ENCODE measurements at regions of chr1 and their contacts with region 1.

Region 1: DNA sequence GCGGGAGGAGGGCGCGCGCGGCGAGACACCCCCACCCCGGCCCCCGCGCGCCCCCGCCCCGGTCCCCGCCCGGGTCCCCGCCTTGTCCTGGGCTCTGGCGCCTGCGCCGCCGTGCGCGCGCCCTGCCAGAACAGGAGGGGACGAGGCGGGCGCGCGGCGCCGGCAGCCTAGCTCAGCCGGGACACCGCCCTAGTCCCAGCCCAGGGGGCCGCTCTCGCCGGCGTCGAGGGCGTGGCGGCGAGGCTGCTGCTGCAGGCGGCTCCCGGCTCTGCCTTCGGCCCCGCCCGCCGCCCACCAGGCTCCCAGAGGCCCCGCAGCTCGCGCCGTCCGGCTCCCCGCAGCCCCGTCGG is at the start of gene RCAN3:
- DNase-seq: peak; percentile 93
- ATAC-seq: peak; percentile 88
- H3K4me3 ChIP-seq: peak within 1 kb of the TSS; percentile 89
- H3K27ac ChIP-seq: peak within 1 kb of the TSS; percentile 77
- H3K4me1 ChIP-seq: peaks cover 26% of the 10 kb centered on the region
- H3K27me3 ChIP-seq: no peaks in the 10 kb centered on the region
- CTCF ChIP-seq: no peak
- total RNA-seq, gene RCAN3: 23.0 and 25.6 TPM in 2 replicates

Region 2: GRCh38 chr1:24150234-24151174 is 352.2 kb before region 1 on chr1:
- CTCF ChIA-PET with region 1: no interaction called
- POLR2A ChIA-PET with region 1: interaction called, 15 read pairs
- intact Hi-C with region 1: no loop called
- DNase-seq: peak; percentile 95
- ATAC-seq: peak; percentile 92
- H3K4me3 ChIP-seq: peak overlapping the region; percentile 68
- H3K27ac ChIP-seq: peak overlapping the region; percentile 77
- H3K4me1 ChIP-seq: peaks cover 23% of the 10 kb centered on the region
- H3K27me3 ChIP-seq: no peaks in the 10 kb centered on the region
- CTCF ChIP-seq: peak; percentile 79

Region 3: DNA sequence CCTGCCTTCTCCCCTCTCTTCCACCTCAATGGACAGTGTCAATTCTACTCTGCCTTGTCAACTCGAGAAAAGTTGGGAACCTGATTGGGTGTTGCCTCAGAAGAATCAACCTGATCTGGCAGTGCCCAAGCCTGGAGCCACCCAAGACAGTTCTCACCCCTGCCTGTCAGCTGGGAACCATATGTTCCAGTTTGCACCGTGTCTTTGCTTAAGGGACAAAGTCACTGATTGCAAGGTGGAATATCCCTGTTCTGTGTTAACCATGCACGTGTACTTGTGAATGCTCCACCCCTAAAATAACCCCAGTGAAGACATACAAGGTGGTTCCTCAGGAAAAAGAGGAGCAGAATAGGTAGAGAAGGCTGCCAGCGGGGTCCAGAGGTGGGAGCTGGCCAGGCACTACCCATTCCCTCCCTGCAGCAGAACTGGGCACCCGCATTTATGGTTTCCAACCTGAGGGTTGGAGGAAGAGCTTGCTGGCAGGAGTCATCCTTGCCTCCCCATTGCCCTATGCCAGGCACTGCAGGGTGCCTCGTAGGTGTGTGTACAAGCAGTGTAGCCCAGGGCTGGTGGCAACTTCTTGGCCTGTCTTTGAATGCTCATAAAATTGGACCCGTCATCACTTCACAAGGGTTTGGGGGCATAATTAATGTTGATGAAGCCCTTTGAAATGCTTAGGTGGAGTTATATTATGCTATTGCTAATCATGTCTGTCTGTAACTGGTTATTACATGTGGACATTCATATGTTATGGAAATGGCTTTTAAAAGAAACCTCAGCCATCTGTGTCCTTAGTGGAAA is 75.7 kb before region 1 on chr1:
- CTCF ChIA-PET with region 1: no interaction called
- POLR2A ChIA-PET with region 1: no interaction called
- intact Hi-C with region 1: no loop called
- DNase-seq: no peak
- ATAC-seq: no peak
- H3K4me3 ChIP-seq: no peak overlapping the region
- H3K27ac ChIP-seq: no peak overlapping the region
- H3K4me1 ChIP-seq: no peaks in the 10 kb centered on the region
- H3K27me3 ChIP-seq: no peaks in the 10 kb centered on the region
- CTCF ChIP-seq: no peak

Region 4: GRCh38 chr1:24513706-24514105 is 11.0 kb after region 1 on chr1:
- CTCF ChIA-PET with region 1: no interaction called
- POLR2A ChIA-PET with region 1: interaction called, 7 read pairs
- intact Hi-C with region 1: loop called (anchors 1 kb)
- DNase-seq: no peak
- ATAC-seq: no peak
- H3K4me3 ChIP-seq: no peak overlapping the region
- H3K27ac ChIP-seq: no peak overlapping the region
- H3K4me1 ChIP-seq: peaks cover 20% of the 10 kb centered on the region
- H3K27me3 ChIP-seq: no peaks in the 10 kb centered on the region
- CTCF ChIP-seq: no peak

Region 5: DNA sequence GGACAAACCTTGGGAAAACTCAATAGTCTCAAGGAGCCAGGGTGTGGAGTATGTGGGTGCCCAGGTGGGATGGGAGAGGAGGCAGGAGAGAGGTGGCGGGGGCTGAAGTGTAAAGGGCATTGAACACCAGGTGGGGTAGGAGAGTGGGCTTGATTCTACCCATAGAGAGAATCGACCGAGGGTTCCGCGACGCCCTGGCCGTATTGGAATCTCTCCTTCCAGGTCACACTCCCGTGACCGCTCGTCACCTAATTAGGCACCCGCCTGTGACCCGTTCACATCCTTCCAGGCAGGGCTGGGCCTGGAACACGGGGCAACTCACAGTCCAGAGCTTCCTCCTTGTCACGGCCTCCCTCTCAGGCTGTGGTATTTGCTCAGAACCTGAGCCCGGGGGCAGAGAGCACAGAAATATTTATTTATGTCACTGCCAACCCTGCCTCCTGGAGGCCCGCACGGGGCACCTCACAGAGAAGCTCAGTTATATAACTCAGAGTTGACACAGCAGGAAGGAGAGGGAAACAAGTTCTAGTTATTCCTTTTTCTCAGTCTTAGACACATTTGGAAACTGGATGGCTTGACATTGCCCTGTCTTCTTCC is 65.2 kb after region 1 on chr1:
- CTCF ChIA-PET with region 1: no interaction called
- POLR2A ChIA-PET with region 1: no interaction called
- intact Hi-C with region 1: no loop called
- DNase-seq: peak; percentile 84
- ATAC-seq: peak; percentile 97
- H3K4me3 ChIP-seq: no peak overlapping the region; the same call in 1 of the 2 replicates
- H3K27ac ChIP-seq: 0 out of 2 replicates have a peak overlapping the region, but pooled peaks have one; percentile 1
- H3K4me1 ChIP-seq: peaks cover 39% of the 10 kb centered on the region
- H3K27me3 ChIP-seq: no peaks in the 10 kb centered on the region
- CTCF ChIP-seq: peak; percentile 51

Region 6: DNA sequence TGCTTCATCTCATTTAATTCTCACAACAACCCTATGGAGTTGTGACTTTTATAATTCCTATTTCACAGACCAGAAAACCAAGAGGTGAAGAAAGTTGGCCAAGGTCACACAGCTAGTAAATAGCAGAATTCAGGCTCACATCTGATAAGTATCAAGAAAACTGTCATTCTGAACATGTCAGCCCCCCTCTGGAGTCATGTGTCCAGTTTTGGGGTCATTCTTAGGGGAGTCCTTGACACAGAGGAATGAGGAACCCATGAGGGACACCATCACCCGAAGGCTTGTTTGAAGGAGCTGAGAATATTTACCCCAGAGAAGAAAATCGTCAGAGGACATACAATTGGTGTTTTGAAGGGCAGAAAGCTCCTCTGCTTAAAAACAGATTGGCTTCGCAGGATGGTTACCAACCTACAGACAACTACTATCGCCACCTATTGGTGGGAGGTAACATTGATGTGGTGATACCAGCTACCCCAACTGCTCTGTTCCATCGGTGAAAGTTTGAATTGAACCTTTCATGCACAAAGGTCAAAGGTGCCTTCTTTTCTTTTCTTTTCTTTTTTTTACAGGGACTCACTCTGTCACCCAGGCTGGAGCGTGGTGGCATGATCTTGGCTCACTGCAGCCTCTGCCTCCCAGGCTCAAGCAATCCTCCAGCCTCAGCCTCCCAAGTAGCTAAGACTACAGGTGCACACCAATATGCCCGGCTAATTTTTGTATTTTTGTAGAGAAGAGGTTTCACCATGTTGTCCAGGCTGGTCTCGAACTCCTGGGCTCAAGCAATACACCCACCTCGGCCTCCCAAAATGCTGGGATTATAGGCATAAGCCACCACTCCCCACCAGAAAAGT is 84.5 kb after region 1 on chr1:
- CTCF ChIA-PET with region 1: interaction called, 3 read pairs
- POLR2A ChIA-PET with region 1: no interaction called
- intact Hi-C with region 1: loop called (anchors 5 kb)
- DNase-seq: peak; percentile 73
- ATAC-seq: peak; percentile 84
- H3K4me3 ChIP-seq: no peak overlapping the region
- H3K27ac ChIP-seq: no peak overlapping the region
- H3K4me1 ChIP-seq: no peaks in the 10 kb centered on the region; the same call in 1 of the 2 replicates
- H3K27me3 ChIP-seq: no peaks in the 10 kb centered on the region
- CTCF ChIP-seq: peak; percentile 82

Region 7: GRCh38 chr1:24635195-24635843 is 132.6 kb after region 1 on chr1:
- CTCF ChIA-PET with region 1: no interaction called
- POLR2A ChIA-PET with region 1: no interaction called
- intact Hi-C with region 1: loop called (anchors 10 kb)
- DNase-seq: peak; percentile 85
- ATAC-seq: peak; percentile 82
- H3K4me3 ChIP-seq: no peak overlapping the region
- H3K27ac ChIP-seq: no peak overlapping the region
- H3K4me1 ChIP-seq: peaks cover 11% of the 10 kb centered on the region; the same call in 1 of the 2 replicates
- H3K27me3 ChIP-seq: no peaks in the 10 kb centered on the region
- CTCF ChIP-seq: peak; percentile 88

Region 8: GRCh38 chr1:24727501-24728216 is 225.0 kb after region 1 on chr1:
- CTCF ChIA-PET with region 1: no interaction called
- POLR2A ChIA-PET with region 1: no interaction called
- intact Hi-C with region 1: no loop called
- DNase-seq: no peak
- ATAC-seq: no peak
- H3K4me3 ChIP-seq: no peak overlapping the region
- H3K27ac ChIP-seq: no peak overlapping the region
- H3K4me1 ChIP-seq: peaks cover 20% of the 10 kb centered on the region
- H3K27me3 ChIP-seq: no peaks in the 10 kb centered on the region
- CTCF ChIP-seq: no peak